Prostate gland (tissue), 2 donors: ENCODE measurements at regions of chrX and their contacts with region 1.

Region 1: GRCh38 chrX:17812763-17813162 is 48.3 kb downstream of the RAI2 start:
- DNase-seq: no peak
- H3K4me3 ChIP-seq: no peak overlapping the region
- H3K27ac ChIP-seq: no peak overlapping the region
- H3K4me1 ChIP-seq: no peaks in the 10 kb centered on the region
- H3K27me3 ChIP-seq: no peaks in the 10 kb centered on the region
- CTCF ChIP-seq: peak in 3 of 4 experiments; percentile 45 to 52 (median 51)
- POLR2A ChIP-seq: no peak

Region 2: GRCh38 chrX:17706676-17707075 is 106.1 kb before region 1 on chrX:
- intact Hi-C with region 1: no loop called
- DNase-seq: no peak
- H3K4me3 ChIP-seq: no peak overlapping the region
- H3K27ac ChIP-seq: no peak overlapping the region
- H3K4me1 ChIP-seq: no peaks in the 10 kb centered on the region
- H3K27me3 ChIP-seq: no peaks in the 10 kb centered on the region
- CTCF ChIP-seq: no peak
- POLR2A ChIP-seq: no peak

Region 3: GRCh38 chrX:17860811-17861488 is 48.2 kb after region 1 on chrX and contains the start of gene RAI2:
- intact Hi-C with region 1: loop called (anchors 10 kb)
- DNase-seq: peak; percentile 20
- H3K4me3 ChIP-seq: peak within 1 kb of the TSS; percentile 43 to 45
- H3K27ac ChIP-seq: peak within 1 kb of the TSS; percentile 57 to 64
- H3K4me1 ChIP-seq: no peaks in the 10 kb centered on the region
- H3K27me3 ChIP-seq: no peaks in the 10 kb centered on the region
- CTCF ChIP-seq: no peak
- POLR2A ChIP-seq: no peak
- total RNA-seq, gene RAI2: 11.5 to 19.1 TPM

Region 4: GRCh38 chrX:18203631-18204030 is 390.9 kb after region 1 on chrX:
- intact Hi-C with region 1: loop called (anchors 10 kb)
- DNase-seq: no peak
- H3K4me3 ChIP-seq: no peak overlapping the region
- H3K27ac ChIP-seq: no peak overlapping the region
- H3K4me1 ChIP-seq: no peaks in the 10 kb centered on the region
- H3K27me3 ChIP-seq: no peaks in the 10 kb centered on the region
- CTCF ChIP-seq: no peak
- POLR2A ChIP-seq: no peak